Sigmoid colon (tissue), 7 donors: ENCODE measurements at regions of chr2 and their contacts with region 1.

Region 1: GRCh38 chr2:62467475-62468321 is 38.3 kb downstream of the TMEM17 start:
- DNase-seq: no peak
- H3K4me3 ChIP-seq: no peak overlapping the region
- H3K27ac ChIP-seq: peak overlapping the region in 3 of 4 donors; percentile 22 to 53 (median 48)
- H3K4me1 ChIP-seq: peaks cover 0 to 47% (median 17%) of the 10 kb centered on the region in 4 donors
- H3K27me3 ChIP-seq: no peaks in the 10 kb centered on the region
- CTCF ChIP-seq: no peak
- EP300 ChIP-seq: no peak
- POLR2A ChIP-seq: no peak

Region 2: GRCh38 chr2:61694312-61695274 is 773.1 kb before region 1 on chr2:
- intact Hi-C with region 1: no loop called
- DNase-seq: peak; percentile 97
- H3K4me3 ChIP-seq: peak overlapping the region; percentile 80 to 88 (median 85)
- H3K27ac ChIP-seq: peak overlapping the region; percentile 82 to 86 (median 84)
- H3K4me1 ChIP-seq: peaks cover 0 to 14% (median 12%) of the 10 kb centered on the region in 4 donors
- H3K27me3 ChIP-seq: no peaks in the 10 kb centered on the region
- CTCF ChIP-seq: peak; percentile 5 to 49 (median 25)
- EP300 ChIP-seq: no peak
- POLR2A ChIP-seq: peak; percentile 33 to 60

Region 3: GRCh38 chr2:61750624-61751023 is 717.1 kb before region 1 on chr2:
- intact Hi-C with region 1: no loop called
- DNase-seq: no peak
- H3K4me3 ChIP-seq: no peak overlapping the region
- H3K27ac ChIP-seq: no peak overlapping the region
- H3K4me1 ChIP-seq: no peaks in the 10 kb centered on the region
- H3K27me3 ChIP-seq: no peaks in the 10 kb centered on the region
- CTCF ChIP-seq: no peak
- EP300 ChIP-seq: no peak
- POLR2A ChIP-seq: no peak

Region 4: GRCh38 chr2:62423883-62424458 is 43.7 kb before region 1 on chr2:
- intact Hi-C with region 1: no loop called
- DNase-seq: no peak
- H3K4me3 ChIP-seq: no peak overlapping the region
- H3K27ac ChIP-seq: no peak overlapping the region
- H3K4me1 ChIP-seq: no peaks in the 10 kb centered on the region
- H3K27me3 ChIP-seq: no peaks in the 10 kb centered on the region
- CTCF ChIP-seq: no peak
- EP300 ChIP-seq: no peak
- POLR2A ChIP-seq: no peak

Region 5: GRCh38 chr2:62499430-62500060 is 31.8 kb after region 1 on chr2:
- intact Hi-C with region 1: no loop called
- DNase-seq: no peak
- H3K4me3 ChIP-seq: no peak overlapping the region
- H3K27ac ChIP-seq: no peak overlapping the region
- H3K4me1 ChIP-seq: no peaks in the 10 kb centered on the region
- H3K27me3 ChIP-seq: no peaks in the 10 kb centered on the region
- CTCF ChIP-seq: no peak
- EP300 ChIP-seq: no peak
- POLR2A ChIP-seq: no peak

Region 6: GRCh38 chr2:62577994-62578781 is 110.5 kb after region 1 on chr2:
- intact Hi-C with region 1: loop called (anchors 10 kb)
- DNase-seq: no peak
- H3K4me3 ChIP-seq: no peak overlapping the region
- H3K27ac ChIP-seq: peak overlapping the region; percentile 10 to 64 (median 56)
- H3K4me1 ChIP-seq: peaks cover 0 to 36% (median 28%) of the 10 kb centered on the region in 4 donors
- H3K27me3 ChIP-seq: no peaks in the 10 kb centered on the region
- CTCF ChIP-seq: no peak
- EP300 ChIP-seq: no peak
- POLR2A ChIP-seq: no peak